Mammary epithelial cell (primary cell): ENCODE measurements at regions of chr2 and their contacts with region 1.

Region 1: DNA sequence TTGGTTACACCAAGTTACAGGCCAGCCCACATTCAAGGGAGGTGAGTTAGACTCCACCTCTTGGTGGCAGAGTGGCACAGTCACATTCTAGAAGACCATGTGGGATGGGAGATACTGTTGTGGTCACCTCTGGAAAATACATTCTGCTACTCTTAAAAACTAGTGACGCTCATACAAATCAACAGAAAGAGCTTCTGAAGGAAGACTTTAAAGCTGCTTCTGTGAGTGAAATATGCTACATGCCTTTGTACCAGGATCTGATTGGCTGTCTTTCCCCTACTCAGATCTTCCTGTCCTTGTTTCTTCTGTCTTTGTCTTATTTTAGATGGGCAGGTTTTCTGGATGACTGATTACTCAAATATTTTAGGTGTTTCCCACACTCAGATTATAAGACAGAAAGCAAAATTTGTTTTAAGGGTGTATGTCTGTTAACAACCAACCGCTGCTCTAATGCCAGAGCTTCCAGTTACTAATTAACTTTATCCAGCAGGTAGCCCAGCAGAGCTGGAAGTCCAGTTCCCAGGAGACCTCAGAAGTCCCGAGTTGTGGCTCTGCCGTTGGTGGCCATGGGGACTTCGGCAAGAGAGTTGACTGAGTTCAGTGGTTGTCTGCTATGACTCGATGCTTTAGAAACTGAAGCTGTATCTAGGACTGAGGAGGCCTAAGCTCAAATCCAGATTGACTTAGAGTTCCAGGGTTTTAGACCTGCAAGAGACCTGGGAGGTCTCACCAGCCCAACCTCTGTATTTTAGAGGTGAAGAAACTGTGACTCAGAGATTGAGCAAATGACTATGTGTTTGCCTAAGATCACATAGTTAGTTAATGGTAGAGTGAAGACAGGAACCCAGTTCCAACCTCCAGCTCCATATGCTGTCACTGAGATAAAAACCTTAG is 7.4 kb downstream of the IL1R2 start:
- DNase-seq: peak; percentile 73
- H3K4me3 ChIP-seq: no peak overlapping the region
- H3K27ac ChIP-seq: peak overlapping the region; percentile 72
- H3K4me1 ChIP-seq: peaks cover 41% of the 10 kb centered on the region
- H3K27me3 ChIP-seq: no peaks in the 10 kb centered on the region
- CTCF ChIP-seq: no peak

Region 2: DNA sequence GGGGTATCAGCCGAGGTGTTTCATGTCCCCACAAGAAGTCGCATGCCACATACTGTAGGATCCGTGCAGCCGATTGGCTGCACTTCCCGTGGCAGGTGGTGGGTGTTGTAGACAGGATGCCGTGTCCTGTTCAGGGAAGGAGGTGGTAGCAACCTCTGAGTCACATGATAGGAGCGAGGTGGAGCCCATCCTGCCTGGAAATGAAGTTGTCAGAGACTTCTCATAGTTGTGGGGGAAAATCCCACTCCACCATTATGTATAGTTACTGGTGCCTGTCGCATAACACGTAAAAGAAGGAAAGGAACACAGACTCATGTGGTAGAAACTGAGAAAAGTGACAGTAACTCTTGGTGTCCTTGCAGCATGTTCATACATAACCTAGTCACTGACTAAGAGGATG is 98.8 kb before region 1 on chr2:
- CTCF ChIA-PET with region 1: interaction called, 10 read pairs
- dilution Hi-C with region 1: no loop called
- in situ Hi-C with region 1: no loop called
- intact Hi-C with region 1: no loop called
- DNase-seq: no peak
- H3K4me3 ChIP-seq: no peak overlapping the region
- H3K27ac ChIP-seq: peak overlapping the region; percentile 60
- H3K4me1 ChIP-seq: peaks cover 28% of the 10 kb centered on the region
- H3K27me3 ChIP-seq: no peaks in the 10 kb centered on the region
- CTCF ChIP-seq: no peak

Region 3: GRCh38 chr2:101983928-101984327 is 15.2 kb before region 1 on chr2:
- CTCF ChIA-PET with region 1: no interaction called
- dilution Hi-C with region 1: no loop called
- in situ Hi-C with region 1: no loop called
- intact Hi-C with region 1: loop called (anchors 2 kb)
- DNase-seq: peak; percentile 8
- H3K4me3 ChIP-seq: no peak overlapping the region
- H3K27ac ChIP-seq: no peak overlapping the region
- H3K4me1 ChIP-seq: peaks cover 73% of the 10 kb centered on the region
- H3K27me3 ChIP-seq: no peaks in the 10 kb centered on the region
- CTCF ChIP-seq: peak; percentile 39 to 69

Region 4: GRCh38 chr2:102449370-102449974 is 450.3 kb after region 1 on chr2:
- CTCF ChIA-PET with region 1: no interaction called
- dilution Hi-C with region 1: no loop called
- in situ Hi-C with region 1: no loop called
- intact Hi-C with region 1: loop called (anchors 5 kb)
- DNase-seq: peak; percentile 28
- H3K4me3 ChIP-seq: no peak overlapping the region
- H3K27ac ChIP-seq: no peak overlapping the region
- H3K4me1 ChIP-seq: no peaks in the 10 kb centered on the region
- H3K27me3 ChIP-seq: no peaks in the 10 kb centered on the region
- CTCF ChIP-seq: peak; percentile 57 to 68